Prostate gland (tissue), 2 donors: ENCODE measurements at regions of chr1 and their contacts with region 1.

Region 1: DNA sequence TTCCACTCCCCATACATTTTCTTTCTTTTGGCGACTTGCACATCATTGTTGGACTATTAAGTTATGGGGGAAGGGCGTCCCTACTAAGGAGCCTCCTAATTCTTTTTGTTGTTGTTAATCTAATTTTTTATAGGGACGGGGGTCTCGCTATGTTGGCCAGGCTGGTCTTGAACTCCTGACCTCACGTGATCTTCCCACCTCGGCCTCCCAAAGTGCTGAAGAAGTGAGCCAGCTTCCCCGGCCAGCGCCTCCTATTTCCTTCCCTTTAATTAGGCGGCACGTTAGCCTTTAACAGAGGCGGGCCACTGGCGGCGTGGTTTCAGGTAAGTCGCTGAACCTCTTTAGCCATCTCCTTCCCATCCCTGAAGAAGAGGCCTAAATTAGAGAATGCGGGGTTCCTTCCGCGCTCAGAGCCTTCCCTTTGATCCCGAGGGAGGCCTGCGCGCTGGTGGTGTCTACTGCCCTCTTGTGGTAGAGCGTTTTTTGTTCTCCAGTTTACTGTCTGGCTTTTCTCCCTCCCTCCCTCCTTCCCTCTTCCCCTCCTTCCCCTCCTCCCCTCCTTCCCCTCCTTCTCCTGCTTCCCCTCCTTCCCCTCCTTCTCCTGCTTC is 38.1 kb downstream of the TNFRSF9 start:
- DNase-seq: peak; percentile 61
- H3K4me3 ChIP-seq: no peak overlapping the region
- H3K27ac ChIP-seq: no peak overlapping the region
- H3K4me1 ChIP-seq: no peaks in the 10 kb centered on the region
- H3K27me3 ChIP-seq: no peaks in the 10 kb centered on the region
- CTCF ChIP-seq: peak; percentile 34 to 68 (median 59)
- POLR2A ChIP-seq: no peak

Region 2: DNA sequence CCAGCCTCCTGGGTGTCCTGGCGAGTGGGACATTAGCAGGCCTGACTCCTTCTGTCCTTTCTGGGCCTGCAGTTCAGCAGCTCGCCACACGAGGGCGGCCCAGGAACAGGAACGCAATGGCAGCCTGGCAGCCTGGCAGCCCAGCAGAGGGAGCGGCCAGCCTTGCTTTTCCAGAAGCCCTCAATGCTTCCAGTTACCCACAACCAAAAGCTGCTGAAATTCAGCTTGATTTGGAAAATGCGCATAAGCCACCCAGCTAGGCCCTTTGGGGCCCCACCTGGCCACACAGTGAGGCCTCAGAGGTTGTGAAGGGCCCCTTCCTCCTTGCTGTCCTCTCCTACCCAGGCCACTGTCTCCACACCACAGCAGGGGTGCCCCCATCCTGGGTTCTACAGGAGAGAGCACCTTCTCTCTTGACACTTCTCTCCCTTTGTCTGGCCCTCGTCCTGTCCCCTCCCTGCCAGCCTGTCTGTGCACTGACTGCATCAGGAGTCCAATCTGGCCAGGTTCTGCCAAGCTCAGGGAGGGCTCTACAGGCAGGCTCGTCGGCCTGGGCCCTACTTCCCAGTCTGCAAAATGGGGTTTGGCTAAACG is 234.9 kb before region 1 on chr1:
- intact Hi-C with region 1: loop called (anchors 10 kb)
- DNase-seq: peak; percentile 92
- H3K4me3 ChIP-seq: no peak overlapping the region
- H3K27ac ChIP-seq: no peak overlapping the region
- H3K4me1 ChIP-seq: no peaks in the 10 kb centered on the region
- H3K27me3 ChIP-seq: no peaks in the 10 kb centered on the region
- CTCF ChIP-seq: peak; percentile 99 to 100 (median 100)
- POLR2A ChIP-seq: no peak

Region 3: DNA sequence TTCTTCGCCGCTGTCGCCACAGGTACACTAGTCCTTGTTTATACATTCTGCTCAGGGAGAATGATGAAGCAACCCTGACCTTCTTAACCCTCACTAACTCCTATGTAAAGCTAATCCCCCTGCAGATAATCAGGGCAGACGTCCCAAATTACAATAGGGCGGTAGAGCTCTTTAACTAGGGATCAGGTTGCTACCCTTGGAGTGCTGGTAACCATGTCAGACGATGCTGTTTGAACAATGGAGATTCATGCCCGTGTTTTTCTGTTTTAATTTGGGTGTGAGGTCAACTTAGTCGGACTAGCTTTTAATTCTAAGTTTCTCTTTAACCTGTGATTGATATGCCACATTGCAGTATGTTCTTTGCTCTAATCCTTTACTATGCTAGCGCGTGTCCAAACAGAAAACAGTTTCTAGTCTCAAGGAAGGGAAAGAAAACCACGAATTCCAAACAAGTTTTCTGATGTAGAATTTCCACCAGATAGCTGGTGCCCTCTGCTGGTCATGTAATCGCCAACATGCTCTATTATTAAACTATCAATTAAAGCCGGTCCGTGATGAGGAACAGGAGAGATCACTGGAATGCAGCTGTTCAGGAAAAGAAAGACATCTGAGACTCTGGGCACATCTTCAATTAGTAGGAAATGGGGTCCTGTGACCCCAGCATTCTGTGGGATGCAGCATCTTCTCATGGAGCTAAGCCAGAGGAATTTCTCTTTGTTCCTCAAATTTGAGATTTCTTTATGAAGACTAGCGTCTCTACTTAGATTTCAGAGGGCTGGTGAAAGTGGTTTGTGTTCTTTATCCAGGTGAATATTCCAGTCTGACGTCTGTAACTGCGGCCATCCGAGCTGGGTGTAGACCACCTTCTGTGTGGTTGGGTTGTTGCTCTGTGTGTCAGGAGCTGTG is 149.8 kb before region 1 on chr1:
- intact Hi-C with region 1: loop called (anchors 5 kb)
- DNase-seq: peak; percentile 80
- H3K4me3 ChIP-seq: peak overlapping the region in 1 of 2 donors; percentile 10
- H3K27ac ChIP-seq: peak overlapping the region in 1 of 2 donors; percentile 11
- H3K4me1 ChIP-seq: no peaks in the 10 kb centered on the region
- H3K27me3 ChIP-seq: no peaks in the 10 kb centered on the region
- CTCF ChIP-seq: peak; percentile 63 to 93 (median 82)
- POLR2A ChIP-seq: no peak

Region 4: GRCh38 chr1:7942214-7942921 is 39.8 kb after region 1 on chr1:
- intact Hi-C with region 1: no loop called
- DNase-seq: peak; percentile 14
- H3K4me3 ChIP-seq: no peak overlapping the region
- H3K27ac ChIP-seq: no peak overlapping the region
- H3K4me1 ChIP-seq: no peaks in the 10 kb centered on the region
- H3K27me3 ChIP-seq: no peaks in the 10 kb centered on the region
- CTCF ChIP-seq: peak in 2 of 4 experiments; percentile 20 to 27
- POLR2A ChIP-seq: no peak